Heart right ventricle (tissue), 16 donors: ENCODE measurements at regions of chr3 and their contacts with region 1.

Region 1: DNA sequence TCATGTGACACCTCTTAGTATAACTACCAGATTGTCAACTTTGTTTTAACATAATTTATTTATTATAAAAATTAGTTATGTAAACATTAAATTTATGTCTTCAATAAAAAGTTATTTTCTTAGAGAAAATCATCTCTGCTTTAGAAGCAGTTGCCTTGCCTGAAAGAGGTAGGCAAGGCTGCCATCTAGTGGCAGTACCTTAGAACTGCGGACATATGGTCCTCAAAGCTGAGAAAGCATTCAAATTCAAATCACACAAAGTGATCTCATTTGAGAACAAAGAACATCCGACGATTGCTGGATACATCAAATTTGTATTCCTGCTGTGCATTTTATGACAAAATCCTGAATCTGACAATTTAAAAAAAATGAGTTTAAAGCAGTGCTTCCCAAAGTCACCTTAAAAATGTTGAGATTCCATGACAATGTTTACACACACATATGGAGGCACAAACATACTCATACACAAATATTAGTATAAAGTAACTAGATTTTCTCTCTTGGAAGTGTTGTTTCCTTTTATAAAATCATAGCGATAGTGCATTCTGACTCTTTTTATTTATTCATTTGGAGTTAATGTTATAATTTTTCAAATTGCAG is 617.4 kb downstream of the CADM2 start:
- DNase-seq: peak; percentile 17 to 42
- ATAC-seq: no peak
- H3K4me3 ChIP-seq: no peak overlapping the region
- H3K27ac ChIP-seq: no peak overlapping the region
- H3K4me1 ChIP-seq: no peaks in the 10 kb centered on the region
- H3K27me3 ChIP-seq: no peaks in the 10 kb centered on the region
- CTCF ChIP-seq: peak; percentile 66 to 96 (median 87)

Region 2: DNA sequence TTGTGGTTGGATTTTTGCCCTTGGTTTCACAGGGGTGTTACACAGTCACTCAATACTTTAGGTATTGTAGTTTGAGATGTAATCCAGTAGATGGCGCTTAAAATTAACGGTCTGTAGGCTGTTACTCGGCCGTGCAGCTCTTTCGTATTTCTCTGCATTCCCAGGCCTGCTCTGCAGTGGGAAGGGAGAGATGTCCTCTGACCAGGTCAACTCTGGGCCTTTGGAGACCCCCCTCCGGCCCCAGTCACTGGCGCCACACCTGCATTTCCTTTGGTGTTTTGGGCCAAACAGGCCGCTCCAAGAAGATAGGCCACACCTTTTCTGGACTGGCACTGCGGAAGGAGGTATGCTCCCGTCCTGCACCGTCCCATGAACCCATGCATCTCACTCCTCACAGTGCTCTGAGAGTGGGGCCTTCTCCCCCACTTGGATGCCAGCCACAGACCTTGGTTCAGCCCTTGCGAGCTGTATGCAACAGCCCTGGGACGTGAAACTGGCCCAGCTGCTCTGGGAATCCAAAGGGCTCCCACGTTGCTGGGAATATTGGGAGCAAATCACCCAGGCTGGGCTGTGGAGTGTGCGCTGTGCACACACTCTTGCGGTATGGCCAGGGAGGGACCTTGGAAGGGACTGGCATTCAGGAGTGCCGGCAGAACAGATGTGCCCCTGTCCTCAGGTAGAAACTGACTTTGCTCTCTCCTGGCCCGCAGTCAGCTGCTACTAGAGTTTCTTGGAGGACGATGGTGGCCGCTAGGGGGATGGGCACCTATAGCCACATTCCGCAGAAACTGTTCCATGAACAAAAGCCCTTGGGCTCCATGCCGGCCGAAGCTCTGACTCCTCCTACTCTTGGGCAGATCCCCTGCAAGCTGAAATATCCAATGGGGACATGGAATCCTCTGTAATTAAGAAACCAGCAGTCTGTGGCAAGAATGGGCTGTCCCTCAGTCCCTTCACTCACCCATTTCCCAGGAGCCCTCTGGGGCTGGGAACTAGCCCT is 1027.9 kb before region 1 on chr3:
- intact Hi-C with region 1: loop called in 5 of 10 experiments (anchors 5 to 10 kb)
- DNase-seq: no peak
- ATAC-seq: peak in 7 of 8 donors; percentile 24 to 79 (median 58)
- H3K4me3 ChIP-seq: peak overlapping the region in 2 of 10 donors; percentile 3 to 29
- H3K27ac ChIP-seq: no peak overlapping the region
- H3K4me1 ChIP-seq: no peaks in the 10 kb centered on the region
- H3K27me3 ChIP-seq: no peaks in the 10 kb centered on the region
- CTCF ChIP-seq: peak in 7 of 9 donors; percentile 40 to 60 (median 52)

Region 3: DNA sequence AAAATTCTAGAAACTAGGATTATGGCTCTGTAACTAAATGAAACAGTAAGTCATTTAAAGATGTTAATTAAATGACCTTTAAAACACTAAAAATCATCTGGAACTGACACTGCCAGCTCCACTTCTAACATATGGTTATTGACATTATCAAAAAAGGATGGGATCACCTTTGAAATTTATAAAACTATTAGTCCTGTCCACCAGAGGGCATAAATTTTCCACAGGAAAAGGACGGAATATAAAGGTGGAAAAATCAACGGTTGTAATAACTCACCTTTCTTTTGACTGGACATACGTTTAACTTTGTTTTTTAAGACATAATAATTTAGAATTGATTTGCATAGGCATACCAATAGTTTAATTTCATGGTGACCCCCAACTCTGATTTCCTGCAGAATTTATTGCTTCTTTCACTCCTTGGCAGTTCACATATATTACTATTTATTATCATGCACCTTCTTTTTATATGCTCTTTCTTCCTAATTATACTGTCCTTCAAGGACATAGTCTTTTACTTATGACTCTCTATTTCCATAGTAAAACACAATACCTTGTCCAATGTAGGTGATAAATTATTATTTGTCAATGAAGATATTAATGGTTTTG is 271.7 kb before region 1 on chr3:
- intact Hi-C with region 1: loop called in 3 of 10 experiments (anchors 5 to 10 kb)
- DNase-seq: no peak
- ATAC-seq: no peak
- H3K4me3 ChIP-seq: no peak overlapping the region
- H3K27ac ChIP-seq: no peak overlapping the region
- H3K4me1 ChIP-seq: no peaks in the 10 kb centered on the region
- H3K27me3 ChIP-seq: no peaks in the 10 kb centered on the region
- CTCF ChIP-seq: peak in 3 of 9 donors; percentile 13 to 35 (median 21)